PC-3 (cell line): ENCODE measurements at regions of chr12 and their contacts with region 1.

Region 1: DNA sequence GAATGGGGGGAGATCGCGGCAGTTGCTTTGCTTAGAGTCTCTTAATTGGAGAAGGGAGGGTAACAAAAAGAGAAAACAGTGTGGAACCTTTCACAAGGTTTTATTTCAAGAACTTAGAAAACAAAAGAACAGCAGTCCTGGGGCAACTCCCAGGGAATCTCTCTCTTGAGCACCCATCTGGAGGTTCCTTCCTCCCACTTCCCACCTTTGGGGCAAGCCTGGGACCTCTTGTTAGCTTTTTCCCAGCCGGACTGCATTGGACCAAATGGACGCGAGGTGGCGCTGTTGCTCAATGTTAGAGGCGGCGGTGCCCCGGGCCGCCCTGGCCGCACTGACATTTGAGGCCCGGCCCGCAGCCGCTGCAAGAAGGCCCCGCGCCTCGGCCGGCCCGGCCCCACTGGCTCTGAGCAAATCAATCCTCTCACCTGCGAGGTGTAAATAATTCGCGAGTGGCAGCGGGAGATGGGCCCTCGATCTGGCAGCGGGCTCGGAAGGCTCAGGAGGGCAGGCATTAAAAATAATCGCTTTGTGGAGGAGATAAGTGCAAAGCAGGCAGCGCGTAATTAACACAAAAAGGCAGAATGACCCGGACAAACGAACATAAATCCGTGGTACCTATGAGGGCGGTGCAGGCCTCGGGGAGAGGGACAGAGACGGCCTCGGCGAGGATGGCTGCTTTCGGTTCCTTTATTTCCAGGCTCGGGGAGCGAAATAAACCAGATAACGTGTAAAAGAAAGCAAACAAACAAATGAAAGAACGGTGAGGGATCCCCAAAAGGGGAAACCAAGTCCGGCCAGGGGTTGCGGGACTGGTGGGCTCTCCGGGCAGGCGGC is 2.7 kb upstream of the HOXC8 start:
- DNase-seq: peak; percentile 91
- ATAC-seq: peak; percentile 68
- H3K4me3 ChIP-seq: peak overlapping the region; percentile 47; the same call in 1 of the 2 replicates
- H3K27ac ChIP-seq: no peak overlapping the region
- H3K4me1 ChIP-seq: peaks cover 26% of the 10 kb centered on the region
- H3K27me3 ChIP-seq: no peaks in the 10 kb centered on the region
- CTCF ChIP-seq: peak; percentile 95

Region 2: GRCh38 chr12:53757095-53757770 is 248.8 kb before region 1 on chr12:
- CTCF ChIA-PET with region 1: interaction called, 15 read pairs
- POLR2A ChIA-PET with region 1: no interaction called
- intact Hi-C with region 1: no loop called
- DNase-seq: peak; percentile 80
- ATAC-seq: peak; percentile 43
- H3K4me3 ChIP-seq: peak overlapping the region; percentile 34; the same call in 1 of the 2 replicates
- H3K27ac ChIP-seq: no peak overlapping the region
- H3K4me1 ChIP-seq: peaks cover 10% of the 10 kb centered on the region
- H3K27me3 ChIP-seq: no peaks in the 10 kb centered on the region
- CTCF ChIP-seq: peak; percentile 93

Region 3: DNA sequence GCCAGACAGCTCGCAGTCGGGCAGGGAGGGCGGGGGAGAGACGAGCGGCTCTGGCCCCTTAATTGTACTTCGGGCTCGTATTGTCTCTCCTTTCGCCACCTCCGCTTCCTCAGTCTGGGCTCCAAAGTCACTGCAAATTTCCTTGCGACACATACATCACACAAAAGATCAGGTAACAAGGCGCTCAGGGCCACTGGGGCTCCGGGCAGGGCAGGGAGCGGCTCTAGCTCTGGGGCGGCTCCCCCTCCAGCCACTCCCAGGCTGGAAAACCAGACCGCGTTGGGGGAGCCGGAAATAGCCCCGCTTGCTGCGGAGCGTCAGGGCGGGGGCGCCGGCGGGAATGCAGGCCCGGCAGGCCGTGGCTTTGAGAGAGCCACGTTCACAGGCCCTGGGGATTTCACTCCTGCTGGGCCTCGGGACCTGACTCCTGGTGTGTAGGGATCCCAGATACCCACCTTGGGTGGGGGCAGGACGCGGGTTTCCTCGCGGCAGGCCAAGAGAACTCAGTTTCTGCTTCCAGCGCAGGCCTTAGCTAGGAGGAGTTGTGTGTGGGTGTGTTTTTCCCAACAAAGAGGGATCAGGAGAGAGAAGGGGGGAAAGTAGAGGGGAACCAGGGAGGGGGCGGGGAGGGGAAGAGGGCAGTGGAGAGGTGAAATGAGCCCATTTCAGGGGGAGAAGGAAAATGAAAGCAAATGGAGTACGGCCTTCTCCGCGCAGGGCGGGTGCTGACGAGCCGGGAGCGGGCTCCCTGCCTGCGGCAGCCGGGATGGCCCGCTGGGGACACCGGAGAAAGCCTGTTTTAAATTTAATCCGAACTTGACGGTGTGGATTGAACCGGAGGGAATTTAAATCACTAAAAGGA is 10.5 kb before region 1 on chr12:
- CTCF ChIA-PET with region 1: interaction called, 13 read pairs
- POLR2A ChIA-PET with region 1: interaction called, 31 read pairs
- intact Hi-C with region 1: no loop called
- DNase-seq: peak; percentile 83
- ATAC-seq: peak; percentile 70
- H3K4me3 ChIP-seq: peak overlapping the region; percentile 78
- H3K27ac ChIP-seq: peak overlapping the region; percentile 86
- H3K4me1 ChIP-seq: peaks cover 37% of the 10 kb centered on the region
- H3K27me3 ChIP-seq: no peaks in the 10 kb centered on the region
- CTCF ChIP-seq: no peak

Region 4: DNA sequence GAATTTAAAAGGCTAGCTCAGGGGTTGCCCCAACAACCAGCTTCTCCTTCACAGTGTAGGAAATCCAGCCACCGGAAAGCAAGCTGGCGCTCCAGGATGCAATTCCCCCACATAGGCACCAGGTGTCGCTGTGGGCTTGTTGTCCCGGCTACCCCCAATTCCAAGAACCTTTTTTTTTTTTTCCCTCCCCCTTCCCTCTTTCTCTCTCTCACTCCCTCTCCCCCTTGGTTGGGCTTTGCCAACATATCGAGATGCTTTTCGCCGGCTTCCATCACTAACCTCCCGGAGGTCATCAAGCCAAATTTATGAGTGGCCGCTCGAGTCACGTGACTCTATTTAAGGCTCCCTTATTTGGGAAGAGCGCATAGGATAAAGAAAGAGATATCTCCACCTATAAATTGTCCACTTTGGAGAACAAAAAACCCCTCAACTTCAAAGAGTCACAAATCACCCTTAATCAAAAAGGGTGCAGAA is 26.6 kb after region 1 on chr12 and contains the start of gene HOXC5:
- CTCF ChIA-PET with region 1: interaction called, 14 read pairs
- POLR2A ChIA-PET with region 1: interaction called, 9 read pairs
- intact Hi-C with region 1: no loop called
- DNase-seq: peak; percentile 84
- ATAC-seq: peak; percentile 14; the same call in 1 of the 2 replicates
- H3K4me3 ChIP-seq: peak within 1 kb of the TSS; percentile 70
- H3K27ac ChIP-seq: no peak within 1 kb of the TSS
- H3K4me1 ChIP-seq: peaks cover 21% of the 10 kb centered on the region
- H3K27me3 ChIP-seq: no peaks in the 10 kb centered on the region
- CTCF ChIP-seq: peak; percentile 97
- total RNA-seq, gene HOXC5: 0.26 and 0.29 TPM in 2 replicates

Region 5: DNA sequence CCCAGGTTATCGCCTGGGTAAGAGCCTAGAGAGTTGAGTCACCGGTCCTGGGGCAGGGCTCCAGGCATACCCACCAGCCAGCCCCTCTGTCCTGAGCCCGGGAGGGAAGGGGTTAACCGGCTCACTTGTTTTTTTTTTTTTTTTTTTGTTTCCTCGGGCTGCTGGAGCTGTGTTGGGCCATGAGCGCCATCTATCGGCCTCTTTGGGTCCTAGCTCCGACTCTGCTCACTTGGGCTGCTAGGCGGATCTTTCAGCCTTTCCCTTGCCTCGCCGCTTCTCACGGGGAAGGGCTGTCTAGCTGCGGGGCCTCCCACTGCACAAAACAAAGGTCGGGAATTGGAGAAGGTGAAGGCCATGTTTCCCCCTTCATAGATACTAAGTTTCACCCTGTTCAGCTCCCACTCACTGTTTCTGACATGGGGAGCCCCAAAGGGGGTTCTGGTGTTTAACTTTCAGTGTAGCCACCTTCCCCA is 185.5 kb after region 1 on chr12:
- CTCF ChIA-PET with region 1: interaction called, 45 read pairs
- POLR2A ChIA-PET with region 1: interaction called, 23 read pairs
- intact Hi-C with region 1: no loop called
- DNase-seq: peak; percentile 84
- ATAC-seq: peak; percentile 61
- H3K4me3 ChIP-seq: peak overlapping the region; percentile 26; the same call in 1 of the 2 replicates
- H3K27ac ChIP-seq: no peak overlapping the region
- H3K4me1 ChIP-seq: peaks cover 24% of the 10 kb centered on the region
- H3K27me3 ChIP-seq: no peaks in the 10 kb centered on the region
- CTCF ChIP-seq: peak; percentile 85